Activated naive CD4-positive, alpha-beta T cell treated with anti-CD3 and anti-CD28 coated beads for 36 hours (primary cell): ENCODE measurements at regions of chr3 and their contacts with region 1.

Region 1: DNA sequence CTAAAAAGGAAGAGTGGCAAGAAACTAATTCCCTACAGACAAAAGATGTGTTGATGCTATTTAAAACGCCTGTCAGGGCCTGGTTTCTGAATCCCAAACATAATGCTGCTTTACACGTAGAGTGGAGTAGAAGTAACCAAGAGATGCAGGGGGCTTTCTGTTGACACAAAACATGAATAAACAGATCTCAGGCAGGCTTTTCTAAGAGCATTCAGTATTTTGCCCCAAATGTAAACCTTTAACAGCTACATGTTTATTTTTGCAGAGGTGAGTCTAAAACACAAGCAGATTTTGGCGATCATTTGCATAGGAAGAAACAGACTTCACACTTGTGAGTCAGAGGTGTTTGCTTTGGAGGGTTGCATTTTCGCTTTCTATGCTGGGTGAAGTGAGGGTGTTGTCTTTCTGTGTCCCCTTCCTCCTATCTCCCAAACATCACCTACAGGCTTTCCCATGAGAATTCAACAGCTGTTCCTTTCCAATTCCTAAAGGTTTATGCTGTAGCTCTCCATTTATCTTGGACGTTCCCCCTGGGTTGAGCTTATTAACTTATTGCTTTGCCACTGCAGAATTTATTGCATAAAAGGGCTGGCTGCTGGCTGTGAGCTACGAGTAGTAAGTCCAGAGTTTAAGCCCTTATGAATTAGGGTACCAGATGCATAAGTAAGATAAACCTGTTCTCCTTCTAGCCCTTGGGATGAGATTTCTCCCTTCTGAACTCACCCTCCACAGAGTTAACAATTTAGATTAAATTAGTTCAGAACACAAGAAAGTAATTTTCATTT is 156.7 kb downstream of the DIPK2A start:
- DNase-seq: no peak
- H3K4me3 Mint-ChIP-seq: no peak overlapping the region
- H3K27ac Mint-ChIP-seq: no peak overlapping the region
- H3K4me1 Mint-ChIP-seq: no peaks in the 10 kb centered on the region
- H3K27me3 Mint-ChIP-seq: peaks cover 6% of the 10 kb centered on the region

Region 2: GRCh38 chr3:142976621-142977398 is 1151.5 kb before region 1 on chr3:
- CTCF ChIA-PET with region 1: no interaction called
- intact Hi-C with region 1: loop called (anchors 10 kb)
- DNase-seq: no peak
- H3K4me3 Mint-ChIP-seq: no peak overlapping the region
- H3K27ac Mint-ChIP-seq: no peak overlapping the region
- H3K4me1 Mint-ChIP-seq: no peaks in the 10 kb centered on the region
- H3K27me3 Mint-ChIP-seq: peaks cover 7% of the 10 kb centered on the region

Region 3: DNA sequence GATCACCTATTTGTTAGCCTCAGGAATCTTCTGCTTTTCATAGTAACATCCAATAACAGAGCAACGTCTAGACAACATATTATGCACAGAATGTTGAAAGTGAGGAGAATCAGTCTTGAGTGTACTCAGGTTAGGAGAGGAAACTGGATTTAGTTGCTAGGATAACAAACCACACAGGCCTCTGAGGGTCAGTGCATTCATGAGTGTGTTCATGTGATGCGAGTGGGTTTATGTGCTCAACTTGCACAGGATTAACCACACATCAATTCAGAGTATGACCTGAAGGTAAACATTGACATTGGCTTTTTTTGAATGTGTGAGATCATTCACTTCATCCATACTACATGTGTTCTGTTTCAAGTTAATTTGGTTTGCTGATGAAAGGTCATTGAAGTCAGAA is 131.0 kb after region 1 on chr3:
- CTCF ChIA-PET with region 1: no interaction called
- intact Hi-C with region 1: no loop called
- DNase-seq: no peak
- H3K4me3 Mint-ChIP-seq: no peak overlapping the region
- H3K27ac Mint-ChIP-seq: no peak overlapping the region
- H3K4me1 Mint-ChIP-seq: no peaks in the 10 kb centered on the region
- H3K27me3 Mint-ChIP-seq: peaks cover 17% of the 10 kb centered on the region